Activated CD8-positive, alpha-beta memory T cell treated with anti-CD3 and anti-CD28 coated beads, Interleukin-2, amount 10 ng/mL, durations not matched to agents 7 days and 5 days (primary cell): ENCODE measurements at regions of chr2 and their contacts with region 1.

Region 1: DNA sequence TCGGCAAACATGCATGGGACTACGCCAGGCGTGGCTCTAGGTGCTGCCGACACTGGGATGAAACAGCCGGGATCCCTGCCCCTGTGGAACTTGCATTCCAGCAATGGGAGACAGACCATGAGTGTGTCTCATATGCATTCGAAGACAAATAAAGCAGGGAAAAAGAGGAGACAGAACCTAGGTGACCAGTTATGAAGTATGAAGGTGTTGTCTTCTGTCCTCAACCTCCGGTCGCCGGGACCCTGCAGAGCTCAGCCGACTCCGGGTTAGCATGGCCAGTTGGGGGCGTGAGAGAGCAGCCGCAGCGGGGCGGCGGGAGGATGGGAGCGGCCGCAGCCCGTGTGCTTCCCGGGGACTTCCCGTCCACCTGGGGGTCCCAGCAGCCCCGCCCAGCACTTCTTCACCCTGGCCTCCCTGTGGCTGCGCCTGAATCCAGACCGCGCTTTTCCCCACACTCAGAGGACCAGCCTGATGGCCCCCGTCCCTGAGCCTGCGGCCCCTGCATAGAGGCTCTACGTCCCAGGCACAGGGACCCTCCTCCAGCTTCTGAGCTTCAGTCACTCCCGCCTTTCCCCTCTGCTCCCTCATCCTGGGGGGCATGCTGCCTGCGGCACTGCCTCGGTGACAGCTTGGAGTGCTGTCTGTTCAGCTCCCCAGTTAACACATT is 11.4 kb downstream of the ID2 start:
- DNase-seq: peak; percentile 61
- ATAC-seq: peak; percentile 70
- H3K4me3 Mint-ChIP-seq: no peak overlapping the region
- H3K27ac Mint-ChIP-seq: no peak overlapping the region
- H3K4me1 Mint-ChIP-seq: peaks cover 7% of the 10 kb centered on the region
- H3K27me3 Mint-ChIP-seq: peaks cover 22% of the 10 kb centered on the region

Region 2: DNA sequence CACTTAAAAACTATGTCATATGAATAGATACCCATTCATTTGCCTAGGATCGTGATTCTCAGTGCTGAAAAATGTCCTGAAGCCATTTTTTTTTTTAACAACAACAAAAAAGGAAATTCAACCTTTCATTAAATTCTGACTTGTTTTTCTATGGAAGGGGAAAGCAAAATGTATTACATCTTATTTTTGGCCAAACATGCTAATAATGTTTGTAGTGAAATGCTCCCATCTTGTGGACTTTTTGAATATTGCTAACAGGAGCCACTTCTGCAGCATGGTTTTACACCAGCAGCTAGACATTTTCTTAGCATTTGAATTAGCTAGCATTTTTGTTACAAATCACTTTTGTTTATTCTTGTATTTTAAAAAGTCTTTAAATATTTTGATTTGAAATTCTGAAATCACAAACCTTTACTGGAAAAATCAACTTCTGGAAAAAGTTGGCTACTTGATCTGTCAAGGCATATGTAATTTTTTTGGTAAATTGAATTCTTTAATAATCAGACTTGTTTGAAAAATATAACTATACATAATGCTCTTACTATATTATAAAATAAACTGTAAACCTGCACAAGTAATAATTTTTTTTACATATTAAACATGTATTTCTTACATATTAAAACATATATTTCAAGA is 68.4 kb after region 1 on chr2:
- CTCF ChIA-PET with region 1: interaction called, 10 read pairs
- DNase-seq: no peak
- ATAC-seq: no peak
- H3K4me3 Mint-ChIP-seq: no peak overlapping the region
- H3K27ac Mint-ChIP-seq: no peak overlapping the region
- H3K4me1 Mint-ChIP-seq: peaks cover 2% of the 10 kb centered on the region
- H3K27me3 Mint-ChIP-seq: no peaks in the 10 kb centered on the region